Caco-2 (cell line): ENCODE measurements at regions of chr19 and their contacts with region 1.

Region 1: DNA sequence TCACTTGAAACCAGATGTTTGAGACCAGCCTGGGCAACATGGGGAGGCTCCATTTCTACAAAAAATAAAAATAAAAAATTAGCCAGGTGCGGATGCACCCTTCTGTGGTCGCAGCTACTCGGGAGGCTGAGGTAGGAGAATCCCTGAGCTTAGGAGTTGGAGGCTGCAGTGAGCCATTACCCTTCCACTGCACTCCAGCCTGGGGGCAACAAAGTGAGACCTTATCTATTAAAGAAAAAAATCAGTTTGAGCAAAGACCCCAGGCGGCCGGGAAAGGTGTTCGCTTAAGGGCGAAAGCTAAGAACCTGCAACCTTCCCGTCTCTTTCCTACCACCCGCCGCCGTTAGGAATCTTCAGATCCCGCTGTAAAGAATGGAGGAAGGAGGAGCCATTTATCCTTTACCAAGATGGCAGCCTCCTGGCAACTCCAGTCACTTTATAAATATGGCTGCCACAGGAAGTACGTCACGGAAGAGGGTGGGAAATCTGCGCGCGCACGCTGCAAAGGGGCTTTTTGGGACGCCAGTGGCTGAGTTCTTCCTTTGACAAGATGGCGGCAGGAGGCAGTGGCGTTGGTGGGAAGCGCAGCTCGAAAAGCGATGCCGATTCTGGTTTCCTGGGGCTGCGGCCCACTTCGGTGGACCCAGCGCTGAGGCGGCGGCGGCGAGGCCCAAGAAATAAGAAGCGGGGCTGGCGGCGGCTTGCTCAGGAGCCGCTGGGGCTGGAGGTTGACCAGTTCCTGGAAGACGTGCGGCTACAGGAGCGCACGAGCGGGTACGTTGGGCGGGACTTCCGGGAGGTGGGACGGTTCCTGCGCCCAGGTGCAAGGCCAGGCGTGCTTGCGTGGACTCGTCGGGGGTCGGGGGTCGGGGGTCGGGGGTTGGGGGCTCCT is at the start of gene NOP53:
- DNase-seq: peak; percentile 97
- H3K4me3 ChIP-seq: peak within 1 kb of the TSS; percentile 69
- H3K4me3 Mint-ChIP-seq: peak within 1 kb of the TSS; percentile 92
- H3K27ac Mint-ChIP-seq: peak within 1 kb of the TSS; percentile 99
- H3K4me1 ChIP-seq: peaks cover 4% of the 10 kb centered on the region; the same call in 1 of the 2 replicates
- H3K4me1 Mint-ChIP-seq: peaks cover 5% of the 10 kb centered on the region
- H3K27me3 ChIP-seq: no peaks in the 10 kb centered on the region
- H3K27me3 Mint-ChIP-seq: no peaks in the 10 kb centered on the region
- CTCF ChIP-seq: no peak
- total RNA-seq, gene NOP53: 347 and 360 TPM in 2 replicates

Region 2: GRCh38 chr19:47713046-47714021 is 31.9 kb before region 1 on chr19 and contains the start of gene EHD2:
- CTCF ChIA-PET with region 1: interaction called, 43 read pairs
- POLR2A ChIA-PET with region 1: no interaction called
- intact Hi-C with region 1: loop called (anchors 1 kb)
- DNase-seq: peak in 1 of 2 experiments; percentile 74
- H3K4me3 ChIP-seq: peak within 1 kb of the TSS; percentile 33
- H3K4me3 Mint-ChIP-seq: peak within 1 kb of the TSS; percentile 77
- H3K27ac Mint-ChIP-seq: peak within 1 kb of the TSS; percentile 12
- H3K4me1 ChIP-seq: 0 out of 2 replicates have a peak, but pooled peaks cover 4% of the 10 kb centered on the region
- H3K4me1 Mint-ChIP-seq: peaks cover 10% of the 10 kb centered on the region
- H3K27me3 ChIP-seq: no peaks in the 10 kb centered on the region
- H3K27me3 Mint-ChIP-seq: no peaks in the 10 kb centered on the region
- CTCF ChIP-seq: peak; percentile 90 to 98
- total RNA-seq, gene EHD2: 13.3 and 14.6 TPM in 2 replicates

Region 3: DNA sequence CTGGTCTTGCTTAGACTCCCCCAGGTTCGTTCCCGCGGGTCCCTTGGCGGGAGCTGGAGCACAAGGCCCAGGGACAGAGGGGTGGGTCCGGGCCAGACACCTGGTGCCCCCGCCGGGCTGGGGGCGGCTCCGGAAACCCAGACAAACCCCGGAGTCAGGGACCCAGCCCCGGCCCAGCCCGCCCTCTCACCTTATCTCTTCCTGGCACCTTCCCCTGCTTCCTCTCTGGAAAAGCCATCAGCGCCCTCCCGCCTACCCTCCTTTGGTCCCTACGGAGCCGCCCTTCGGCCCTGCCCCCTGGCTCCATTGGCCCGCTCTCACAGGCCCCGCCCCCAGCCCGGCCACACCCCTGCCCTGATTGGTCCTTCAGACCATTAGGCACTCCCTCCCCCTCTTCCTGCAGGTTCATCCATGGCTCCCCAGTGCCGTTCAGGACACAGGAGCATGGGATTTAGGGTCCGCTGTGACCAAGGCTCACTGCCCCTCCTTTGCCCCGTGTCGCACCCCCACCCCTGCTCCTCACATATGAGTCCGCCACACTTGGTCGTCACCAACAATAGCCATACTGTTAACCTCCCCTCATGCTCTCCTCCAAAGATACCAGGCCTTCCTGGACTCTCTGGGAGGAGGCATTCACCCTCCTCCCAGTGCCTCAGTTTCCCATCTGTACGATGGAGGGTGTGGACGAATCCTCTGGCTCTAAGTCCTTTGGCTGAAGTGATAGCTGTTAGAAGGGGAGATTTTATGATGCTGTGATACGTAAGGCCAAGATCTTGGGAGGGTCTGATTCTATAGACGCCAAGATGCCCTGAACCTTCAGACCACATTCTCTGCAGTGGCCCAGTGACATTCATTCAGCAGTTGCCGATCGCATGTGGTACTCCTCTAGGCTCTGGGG is 15.0 kb before region 1 on chr19:
- CTCF ChIA-PET with region 1: interaction called, 4 read pairs
- POLR2A ChIA-PET with region 1: no interaction called
- intact Hi-C with region 1: loop called (anchors 1 kb)
- DNase-seq: peak; percentile 94 to 95
- H3K4me3 ChIP-seq: peak overlapping the region; percentile 44
- H3K4me3 Mint-ChIP-seq: peak overlapping the region; percentile 85
- H3K27ac Mint-ChIP-seq: peak overlapping the region; percentile 93
- H3K4me1 ChIP-seq: peaks cover 11% of the 10 kb centered on the region
- H3K4me1 Mint-ChIP-seq: peaks cover 26% of the 10 kb centered on the region
- H3K27me3 ChIP-seq: no peaks in the 10 kb centered on the region
- H3K27me3 Mint-ChIP-seq: no peaks in the 10 kb centered on the region
- CTCF ChIP-seq: no peak

Region 4: DNA sequence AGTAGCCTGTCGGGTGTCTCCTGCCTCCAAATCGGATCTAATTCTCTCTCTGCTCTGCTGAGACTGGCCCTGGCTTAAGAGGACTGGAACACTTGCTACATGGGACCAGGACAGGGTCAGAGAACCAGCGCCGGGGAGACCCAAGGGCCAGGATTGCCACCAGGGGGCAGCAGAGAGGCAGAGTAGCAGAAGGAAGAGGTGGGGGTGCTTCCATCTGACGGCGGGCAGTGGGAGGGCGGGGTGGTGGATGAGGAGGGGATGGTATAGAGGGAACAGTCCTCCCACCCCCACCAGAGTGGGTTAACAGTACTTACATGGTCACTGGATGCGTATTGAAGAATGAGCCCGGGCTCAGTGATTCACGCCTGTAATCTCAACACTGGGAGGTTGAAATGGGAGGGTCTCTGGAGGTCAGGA is 45.1 kb after region 1 on chr19:
- CTCF ChIA-PET with region 1: no interaction called
- POLR2A ChIA-PET with region 1: no interaction called
- intact Hi-C with region 1: loop called (anchors 1 kb)
- DNase-seq: peak; percentile 88 to 89
- H3K4me3 ChIP-seq: no peak overlapping the region
- H3K4me3 Mint-ChIP-seq: no peak overlapping the region
- H3K27ac Mint-ChIP-seq: no peak overlapping the region
- H3K4me1 ChIP-seq: no peaks in the 10 kb centered on the region
- H3K4me1 Mint-ChIP-seq: no peaks in the 10 kb centered on the region
- H3K27me3 ChIP-seq: no peaks in the 10 kb centered on the region
- H3K27me3 Mint-ChIP-seq: no peaks in the 10 kb centered on the region
- CTCF ChIP-seq: peak; percentile 85 to 88

Region 5: GRCh38 chr19:48249502-48250014 is 504.3 kb after region 1 on chr19:
- CTCF ChIA-PET with region 1: no interaction called
- POLR2A ChIA-PET with region 1: no interaction called
- intact Hi-C with region 1: no loop called
- DNase-seq: no peak
- H3K4me3 ChIP-seq: no peak overlapping the region
- H3K4me3 Mint-ChIP-seq: no peak overlapping the region
- H3K27ac Mint-ChIP-seq: no peak overlapping the region
- H3K4me1 ChIP-seq: no peaks in the 10 kb centered on the region
- H3K4me1 Mint-ChIP-seq: peaks cover under 1% of the 10 kb centered on the region
- H3K27me3 ChIP-seq: no peaks in the 10 kb centered on the region
- H3K27me3 Mint-ChIP-seq: no peaks in the 10 kb centered on the region
- CTCF ChIP-seq: no peak